ENCODE measurements at regions of chr1 and their contacts with region 1.

Region 1: DNA sequence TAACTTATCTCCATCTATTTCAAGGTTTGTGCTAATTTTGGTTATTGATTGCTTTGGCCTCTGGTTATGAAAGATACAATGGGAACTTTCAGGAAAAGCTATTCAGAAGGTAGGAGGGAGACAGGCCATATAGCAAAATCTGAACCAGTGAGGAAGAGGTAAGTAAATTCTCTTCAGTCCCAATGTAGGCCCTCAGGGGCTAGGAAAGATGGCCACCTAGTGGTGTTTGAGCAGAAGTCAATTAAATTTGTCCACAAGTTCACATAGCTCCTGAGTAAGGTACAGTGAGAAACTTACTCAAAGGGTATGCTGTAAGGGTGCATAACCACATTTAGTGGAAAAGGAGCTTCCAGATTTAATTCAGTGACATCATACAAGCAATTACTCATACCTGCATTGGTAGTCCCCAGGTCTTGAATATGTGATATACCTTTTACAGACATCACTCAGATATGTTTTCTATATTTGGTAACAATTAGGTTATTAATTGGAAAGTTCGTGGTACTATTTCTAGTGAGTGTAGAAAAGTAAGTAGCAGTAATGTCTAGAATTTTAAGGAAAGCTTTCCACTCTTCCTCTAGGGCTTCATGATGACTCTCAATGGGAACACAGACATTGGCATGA is 21.4 kb upstream of the FMO1 start:
- DNase-seq: peak; percentile 85
- H3K4me3 Mint-ChIP-seq: no peak overlapping the region
- H3K27ac Mint-ChIP-seq: no peak overlapping the region
- H3K4me1 Mint-ChIP-seq: peaks cover 21% of the 10 kb centered on the region
- H3K27me3 Mint-ChIP-seq: no peaks in the 10 kb centered on the region
- CTCF ChIP-seq: peak; percentile 96

Region 2: GRCh38 chr1:171075041-171075440 is 151.8 kb before region 1 on chr1:
- CTCF ChIA-PET with region 1: interaction called, 146 read pairs
- POLR2A ChIA-PET with region 1: no interaction called
- intact Hi-C with region 1: no loop called
- DNase-seq: no peak
- H3K4me3 Mint-ChIP-seq: no peak overlapping the region
- H3K27ac Mint-ChIP-seq: no peak overlapping the region
- H3K4me1 Mint-ChIP-seq: no peaks in the 10 kb centered on the region
- H3K27me3 Mint-ChIP-seq: no peaks in the 10 kb centered on the region
- CTCF ChIP-seq: no peak

Region 3: DNA sequence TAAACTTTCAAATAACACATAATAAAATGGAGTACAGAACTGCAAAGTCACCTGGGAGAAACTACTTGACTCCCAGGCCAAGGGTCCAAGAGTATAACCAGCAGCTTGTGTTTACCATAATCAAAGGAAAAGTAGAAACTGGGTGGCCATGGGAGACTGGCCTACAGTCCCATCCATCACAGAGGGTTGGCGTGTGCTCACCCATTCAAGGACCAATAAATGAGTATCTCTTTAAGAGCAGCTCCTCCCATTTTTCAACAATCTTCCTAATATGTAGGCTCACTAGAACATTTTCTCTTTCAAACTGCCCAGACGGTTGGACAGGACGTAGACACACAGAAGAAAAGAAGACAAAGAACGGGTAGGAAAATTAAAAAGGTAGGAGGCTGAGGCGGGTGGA is 136.3 kb before region 1 on chr1 and contains the start of gene FMO3:
- CTCF ChIA-PET with region 1: interaction called, 58 read pairs
- POLR2A ChIA-PET with region 1: no interaction called
- intact Hi-C with region 1: no loop called
- DNase-seq: no peak
- H3K4me3 Mint-ChIP-seq: no peak within 1 kb of the TSS
- H3K27ac Mint-ChIP-seq: no peak within 1 kb of the TSS
- H3K4me1 Mint-ChIP-seq: no peaks in the 10 kb centered on the region
- H3K27me3 Mint-ChIP-seq: no peaks in the 10 kb centered on the region
- CTCF ChIP-seq: no peak
- total RNA-seq, gene FMO3: not detected in 2 replicates

Region 4: GRCh38 chr1:171188388-171189266 is 38.2 kb before region 1 on chr1:
- CTCF ChIA-PET with region 1: interaction called, 18 read pairs
- POLR2A ChIA-PET with region 1: no interaction called
- intact Hi-C with region 1: loop called (anchors 2 kb)
- DNase-seq: peak; percentile 87
- H3K4me3 Mint-ChIP-seq: no peak overlapping the region
- H3K27ac Mint-ChIP-seq: no peak overlapping the region
- H3K4me1 Mint-ChIP-seq: no peaks in the 10 kb centered on the region
- H3K27me3 Mint-ChIP-seq: no peaks in the 10 kb centered on the region
- CTCF ChIP-seq: peak; percentile 94

Region 5: DNA sequence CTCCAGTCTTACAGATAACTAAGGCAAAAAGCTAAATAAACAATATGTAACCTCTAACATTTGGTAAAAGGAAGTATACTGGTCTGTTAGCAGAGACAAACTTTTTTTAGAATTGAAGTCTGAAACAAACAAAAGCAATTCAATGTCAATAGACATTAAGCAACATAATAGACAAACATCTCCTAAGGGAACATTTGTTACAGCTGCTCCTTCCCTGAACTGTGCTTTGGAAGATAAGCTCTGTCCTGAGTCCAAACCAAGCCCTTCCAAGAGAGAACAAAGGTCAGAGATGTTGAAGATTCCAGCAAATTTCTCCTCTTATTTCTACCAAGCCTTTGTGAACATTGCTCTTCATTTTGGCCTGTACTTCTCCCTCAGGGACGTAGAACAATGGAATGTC is 16.5 kb before region 1 on chr1:
- CTCF ChIA-PET with region 1: interaction called, 53 read pairs
- POLR2A ChIA-PET with region 1: no interaction called
- intact Hi-C with region 1: no loop called
- DNase-seq: no peak
- H3K4me3 Mint-ChIP-seq: no peak overlapping the region
- H3K27ac Mint-ChIP-seq: no peak overlapping the region
- H3K4me1 Mint-ChIP-seq: no peaks in the 10 kb centered on the region
- H3K27me3 Mint-ChIP-seq: no peaks in the 10 kb centered on the region
- CTCF ChIP-seq: no peak

Region 6: DNA sequence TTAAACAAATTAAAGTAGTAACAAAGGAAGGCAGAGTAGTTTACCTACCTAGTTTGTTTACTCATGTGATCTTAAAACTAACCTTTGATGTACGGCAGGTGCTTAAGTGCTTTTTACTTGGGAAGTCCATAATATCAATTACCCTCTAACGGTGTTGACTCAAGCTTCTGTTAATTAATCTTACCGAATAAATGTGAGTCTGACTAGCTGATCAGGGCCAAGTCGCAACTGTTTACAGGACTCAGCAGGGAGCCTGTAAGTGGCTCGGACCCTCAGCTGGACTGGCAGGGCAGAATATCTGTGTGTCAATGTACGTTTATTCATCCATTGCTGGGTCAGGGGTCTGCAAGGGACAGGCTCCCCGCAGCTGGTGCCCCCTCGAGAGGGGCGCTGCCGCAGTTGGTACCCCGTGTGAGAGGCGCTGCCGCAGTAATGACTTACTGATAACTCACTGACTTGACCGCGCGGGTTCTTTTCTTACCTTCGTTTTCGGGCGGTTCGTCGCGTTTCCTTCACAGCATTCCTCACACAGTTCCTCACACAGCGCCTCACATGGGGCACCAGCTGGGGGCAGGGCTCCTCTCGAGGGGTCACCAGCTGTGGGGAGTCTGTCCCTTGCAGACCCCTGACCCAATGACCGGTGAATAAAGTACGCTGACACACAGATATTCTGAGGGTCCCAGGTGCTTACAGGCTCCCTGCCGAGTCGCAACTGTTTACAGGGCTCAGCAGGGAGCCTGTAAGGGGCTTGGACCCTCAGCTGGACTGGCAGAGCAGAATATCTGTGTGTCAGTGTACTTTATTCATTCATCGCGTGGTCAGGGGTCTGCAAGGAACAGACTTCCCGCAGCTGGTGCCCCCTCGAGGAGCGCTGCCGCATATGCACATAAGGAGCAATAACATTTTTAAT is 24.4 kb after region 1 on chr1:
- CTCF ChIA-PET with region 1: interaction called, 181 read pairs
- POLR2A ChIA-PET with region 1: interaction called, 4 read pairs
- intact Hi-C with region 1: no loop called
- DNase-seq: peak; percentile 68
- H3K4me3 Mint-ChIP-seq: peak overlapping the region; percentile 82
- H3K27ac Mint-ChIP-seq: peak overlapping the region; percentile 64
- H3K4me1 Mint-ChIP-seq: peaks cover 13% of the 10 kb centered on the region
- H3K27me3 Mint-ChIP-seq: no peaks in the 10 kb centered on the region
- CTCF ChIP-seq: peak; percentile 56

Region 7: DNA sequence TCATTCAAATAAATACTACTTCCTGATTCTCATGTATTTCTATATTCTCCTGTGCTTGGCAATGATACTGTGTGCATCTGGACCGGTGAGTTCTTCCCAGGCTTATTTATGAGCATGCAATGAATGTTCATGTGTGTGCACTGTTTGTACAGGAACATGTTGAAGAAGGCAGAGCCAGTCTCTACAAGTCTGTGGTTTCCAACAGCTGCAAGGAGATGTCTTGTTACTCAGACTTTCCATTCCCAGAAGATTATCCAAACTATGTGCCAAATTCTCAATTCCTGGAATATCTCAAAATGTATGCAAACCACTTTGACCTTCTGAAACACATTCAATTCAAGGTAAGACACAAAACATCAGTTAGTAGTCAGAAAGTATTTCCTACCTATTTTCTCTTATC is 40.5 kb after region 1 on chr1:
- CTCF ChIA-PET with region 1: interaction called, 11 read pairs
- POLR2A ChIA-PET with region 1: no interaction called
- intact Hi-C with region 1: no loop called
- DNase-seq: no peak
- H3K4me3 Mint-ChIP-seq: no peak overlapping the region
- H3K27ac Mint-ChIP-seq: no peak overlapping the region
- H3K4me1 Mint-ChIP-seq: peaks cover 8% of the 10 kb centered on the region
- H3K27me3 Mint-ChIP-seq: no peaks in the 10 kb centered on the region
- CTCF ChIP-seq: no peak

Region 8: DNA sequence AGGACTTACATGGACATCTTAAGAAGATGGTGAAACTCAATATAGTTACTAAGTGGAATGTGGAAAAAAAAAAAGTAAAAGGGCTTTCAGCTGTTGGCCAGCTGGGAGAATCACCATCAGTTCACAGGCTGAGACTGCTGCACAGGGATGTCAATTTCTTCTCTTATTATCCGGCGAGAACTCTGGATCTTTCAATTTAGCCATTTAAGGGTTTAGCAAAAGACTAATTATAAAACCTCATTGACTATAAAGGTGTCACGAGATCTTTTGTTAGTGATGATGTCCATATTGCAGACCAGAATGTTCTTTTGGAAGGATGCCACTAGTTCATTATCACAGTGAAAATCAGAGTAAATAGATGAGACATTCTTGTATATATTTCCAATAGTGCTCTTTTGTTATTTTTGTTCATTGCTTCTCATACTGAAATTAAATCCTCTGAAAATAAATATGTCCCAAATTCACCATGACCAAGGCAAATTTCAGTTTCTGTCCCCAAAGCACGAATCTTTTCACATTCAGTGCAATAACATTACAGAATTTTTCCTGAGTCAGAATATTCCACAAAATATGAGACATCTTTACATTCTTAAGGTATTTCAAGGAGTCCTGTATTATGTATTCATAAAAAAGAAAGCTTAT is 880.6 kb after region 1 on chr1:
- CTCF ChIA-PET with region 1: no interaction called
- POLR2A ChIA-PET with region 1: no interaction called
- intact Hi-C with region 1: no loop called
- DNase-seq: no peak
- H3K4me3 Mint-ChIP-seq: no peak overlapping the region
- H3K27ac Mint-ChIP-seq: no peak overlapping the region
- H3K4me1 Mint-ChIP-seq: no peaks in the 10 kb centered on the region
- H3K27me3 Mint-ChIP-seq: no peaks in the 10 kb centered on the region
- CTCF ChIP-seq: no peak

Measured in MCF 10A (cell line).